ENCODE measurements at regions of chr1 and their contacts with region 1.

Region 1: GRCh38 chr1:40404670-40405462 is 31.3 kb downstream of the SMAP2 start:
- DNase-seq: no peak
- ATAC-seq: peak; percentile 21
- H3K4me3 ChIP-seq: 0 out of 2 replicates have a peak overlapping the region, but pooled peaks have one; percentile 2
- H3K27ac ChIP-seq: peak overlapping the region; percentile 68
- H3K4me1 ChIP-seq: peaks cover 45% of the 10 kb centered on the region
- H3K27me3 ChIP-seq: no peaks in the 10 kb centered on the region
- CTCF ChIP-seq: peak; percentile 65 to 74 (median 72)
- EP300 ChIP-seq: no peak
- POLR2A ChIP-seq: no peak
- RAD21 ChIP-seq: peak; percentile 82

Region 2: GRCh38 chr1:40096977-40097782 is 307.7 kb before region 1 on chr1 and contains the start of gene PPT1:
- CTCF ChIA-PET with region 1: no interaction called
- POLR2A ChIA-PET with region 1: no interaction called
- RAD21 ChIA-PET with region 1: no interaction called
- SMC1A ChIA-PET with region 1: no interaction called
- in situ Hi-C with region 1: no loop called
- intact Hi-C with region 1: loop called (anchors 10 kb)
- DNase-seq: peak; percentile 7
- ATAC-seq: peak; percentile 98
- H3K4me3 ChIP-seq: peak within 1 kb of the TSS; percentile 76
- H3K27ac ChIP-seq: peak within 1 kb of the TSS; percentile 3; the same call in 1 of the 2 replicates
- H3K4me1 ChIP-seq: peaks cover 4% of the 10 kb centered on the region; the same call in 1 of the 2 replicates
- H3K27me3 ChIP-seq: no peaks in the 10 kb centered on the region
- CTCF ChIP-seq: peak in 2 of 3 experiments; percentile 7 to 18; a peak in 2 of 6 replicates
- EP300 ChIP-seq: no peak
- POLR2A ChIP-seq: peak; percentile 95
- RAD21 ChIP-seq: no peak
- polyA plus RNA-seq, gene PPT1: 111 to 147 TPM

Region 3: GRCh38 chr1:40257688-40258444 is 147.0 kb before region 1 on chr1 and contains the start of gene ZMPSTE24:
- CTCF ChIA-PET with region 1: interaction called, 6 read pairs
- POLR2A ChIA-PET with region 1: interaction called, 4 read pairs
- RAD21 ChIA-PET with region 1: interaction called, 3 read pairs
- SMC1A ChIA-PET with region 1: interaction called, 5 read pairs
- in situ Hi-C with region 1: no loop called
- intact Hi-C with region 1: loop called (anchors 10 kb)
- DNase-seq: peak; percentile 87
- ATAC-seq: peak; percentile 98
- H3K4me3 ChIP-seq: peak within 1 kb of the TSS; percentile 84
- H3K27ac ChIP-seq: peak within 1 kb of the TSS; percentile 99
- H3K4me1 ChIP-seq: peaks cover 8% of the 10 kb centered on the region; the same call in 1 of the 2 replicates
- H3K27me3 ChIP-seq: no peaks in the 10 kb centered on the region
- CTCF ChIP-seq: no peak
- EP300 ChIP-seq: 0 out of 4 replicates have a peak, but pooled peaks of 1 of the 2 experiments have one; percentile 51
- POLR2A ChIP-seq: peak; percentile 90
- RAD21 ChIP-seq: peak; percentile 22; the same call in 1 of the 2 replicates
- polyA plus RNA-seq, gene ZMPSTE24: 30.1 to 56.0 TPM

Region 4: DNA sequence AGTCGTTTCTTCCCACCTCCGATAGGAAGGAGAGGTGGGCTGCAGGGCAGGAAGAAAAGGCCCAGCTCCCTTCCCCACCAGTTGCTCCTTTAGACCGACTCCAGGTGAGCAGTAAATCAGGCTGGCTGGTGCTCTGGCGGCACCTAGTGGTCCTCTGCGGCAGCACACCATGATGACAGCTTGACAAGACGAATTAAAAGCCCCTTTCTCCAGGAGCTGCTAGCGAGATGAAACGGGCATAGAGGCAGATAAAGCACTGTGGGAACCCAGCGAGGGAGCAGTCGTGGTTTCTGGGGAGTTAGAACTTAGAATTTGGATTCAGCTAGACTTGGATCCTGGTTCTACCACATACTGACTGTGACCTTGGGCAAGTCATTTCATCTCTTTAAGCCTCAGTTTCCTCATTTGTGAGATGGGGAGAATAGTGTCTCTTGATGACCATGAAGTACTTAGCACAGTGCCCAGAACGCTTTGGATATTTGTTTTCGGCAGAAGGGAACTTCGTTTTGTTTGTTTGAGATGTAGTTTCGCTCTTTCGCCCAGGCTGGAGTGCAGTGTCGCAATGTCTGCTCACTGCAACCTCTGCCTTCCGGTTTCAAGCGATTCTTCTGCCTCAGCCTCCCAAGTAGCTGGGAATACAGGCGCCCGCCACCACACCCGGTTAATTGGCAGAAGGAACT is 66.0 kb before region 1 on chr1:
- CTCF ChIA-PET with region 1: interaction called, 148 read pairs
- POLR2A ChIA-PET with region 1: interaction called, 4 read pairs
- RAD21 ChIA-PET with region 1: interaction called, 64 read pairs
- SMC1A ChIA-PET with region 1: interaction called, 117 read pairs
- in situ Hi-C with region 1: loop called (anchors 5 kb)
- intact Hi-C with region 1: loop called (anchors 1 kb)
- DNase-seq: peak; percentile 76
- ATAC-seq: peak; percentile 99
- H3K4me3 ChIP-seq: no peak overlapping the region
- H3K27ac ChIP-seq: no peak overlapping the region
- H3K4me1 ChIP-seq: peaks cover 5% of the 10 kb centered on the region; the same call in 1 of the 2 replicates
- H3K27me3 ChIP-seq: no peaks in the 10 kb centered on the region
- CTCF ChIP-seq: peak; percentile 99; a peak in 5 of 6 replicates
- EP300 ChIP-seq: no peak
- POLR2A ChIP-seq: no peak
- RAD21 ChIP-seq: peak; percentile 98

Region 5: GRCh38 chr1:40352126-40352525 is 52.7 kb before region 1 on chr1:
- CTCF ChIA-PET with region 1: interaction called, 6 read pairs
- POLR2A ChIA-PET with region 1: interaction called, 3 read pairs
- RAD21 ChIA-PET with region 1: interaction called, 7 read pairs
- SMC1A ChIA-PET with region 1: interaction called, 10 read pairs
- in situ Hi-C with region 1: no loop called
- intact Hi-C with region 1: no loop called
- DNase-seq: no peak
- ATAC-seq: peak; percentile 94
- H3K4me3 ChIP-seq: no peak overlapping the region
- H3K27ac ChIP-seq: no peak overlapping the region; the same call in 1 of the 2 replicates
- H3K4me1 ChIP-seq: peaks cover 13% of the 10 kb centered on the region
- H3K27me3 ChIP-seq: no peaks in the 10 kb centered on the region
- CTCF ChIP-seq: no peak
- EP300 ChIP-seq: no peak
- POLR2A ChIP-seq: no peak
- RAD21 ChIP-seq: no peak

Region 6: GRCh38 chr1:40373338-40374283 is 31.3 kb before region 1 on chr1 and contains the start of gene SMAP2:
- CTCF ChIA-PET with region 1: interaction called, 271 read pairs
- POLR2A ChIA-PET with region 1: interaction called, 43 read pairs
- RAD21 ChIA-PET with region 1: interaction called, 22 read pairs
- SMC1A ChIA-PET with region 1: interaction called, 426 read pairs
- in situ Hi-C with region 1: no loop called
- intact Hi-C with region 1: no loop called
- DNase-seq: peak; percentile 85
- ATAC-seq: peak; percentile 87
- H3K4me3 ChIP-seq: peak within 1 kb of the TSS; percentile 86
- H3K27ac ChIP-seq: peak within 1 kb of the TSS; percentile 94
- H3K4me1 ChIP-seq: peaks cover 9% of the 10 kb centered on the region
- H3K27me3 ChIP-seq: no peaks in the 10 kb centered on the region
- CTCF ChIP-seq: no peak
- EP300 ChIP-seq: no peak
- POLR2A ChIP-seq: peak; percentile 89
- RAD21 ChIP-seq: no peak
- polyA plus RNA-seq, gene SMAP2: 33.4 to 42.4 TPM

Region 7: DNA sequence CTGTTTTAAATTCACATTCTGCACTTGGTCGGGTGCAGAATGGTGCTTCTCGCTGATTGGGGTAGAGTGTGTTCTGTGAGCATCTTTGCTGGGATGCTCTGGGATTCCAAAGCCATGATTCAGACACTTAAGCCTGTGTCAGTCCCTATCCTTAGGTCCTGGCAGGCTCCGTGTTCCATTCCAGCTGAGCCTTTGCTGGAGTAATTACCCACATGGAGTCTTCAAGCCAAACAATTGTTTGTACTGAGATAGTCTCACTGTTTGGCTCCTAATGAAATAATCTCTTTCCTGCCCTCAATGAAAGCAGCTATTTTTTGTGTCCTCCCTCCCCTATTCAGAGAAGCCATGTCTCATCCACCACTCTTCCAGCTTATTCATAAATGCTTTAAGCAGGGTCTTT is 12.6 kb before region 1 on chr1:
- CTCF ChIA-PET with region 1: interaction called, 271 read pairs
- POLR2A ChIA-PET with region 1: interaction called, 243 read pairs
- RAD21 ChIA-PET with region 1: interaction called, 189 read pairs
- SMC1A ChIA-PET with region 1: interaction called, 426 read pairs
- in situ Hi-C with region 1: no loop called
- intact Hi-C with region 1: no loop called
- DNase-seq: no peak
- ATAC-seq: no peak
- H3K4me3 ChIP-seq: no peak overlapping the region
- H3K27ac ChIP-seq: peak overlapping the region; percentile 56
- H3K4me1 ChIP-seq: peaks cover 73% of the 10 kb centered on the region
- H3K27me3 ChIP-seq: no peaks in the 10 kb centered on the region
- CTCF ChIP-seq: no peak
- EP300 ChIP-seq: no peak
- POLR2A ChIP-seq: no peak
- RAD21 ChIP-seq: no peak